B cell (primary cell): ENCODE measurements at regions of chr2 and their contacts with region 1.

Region 1: DNA sequence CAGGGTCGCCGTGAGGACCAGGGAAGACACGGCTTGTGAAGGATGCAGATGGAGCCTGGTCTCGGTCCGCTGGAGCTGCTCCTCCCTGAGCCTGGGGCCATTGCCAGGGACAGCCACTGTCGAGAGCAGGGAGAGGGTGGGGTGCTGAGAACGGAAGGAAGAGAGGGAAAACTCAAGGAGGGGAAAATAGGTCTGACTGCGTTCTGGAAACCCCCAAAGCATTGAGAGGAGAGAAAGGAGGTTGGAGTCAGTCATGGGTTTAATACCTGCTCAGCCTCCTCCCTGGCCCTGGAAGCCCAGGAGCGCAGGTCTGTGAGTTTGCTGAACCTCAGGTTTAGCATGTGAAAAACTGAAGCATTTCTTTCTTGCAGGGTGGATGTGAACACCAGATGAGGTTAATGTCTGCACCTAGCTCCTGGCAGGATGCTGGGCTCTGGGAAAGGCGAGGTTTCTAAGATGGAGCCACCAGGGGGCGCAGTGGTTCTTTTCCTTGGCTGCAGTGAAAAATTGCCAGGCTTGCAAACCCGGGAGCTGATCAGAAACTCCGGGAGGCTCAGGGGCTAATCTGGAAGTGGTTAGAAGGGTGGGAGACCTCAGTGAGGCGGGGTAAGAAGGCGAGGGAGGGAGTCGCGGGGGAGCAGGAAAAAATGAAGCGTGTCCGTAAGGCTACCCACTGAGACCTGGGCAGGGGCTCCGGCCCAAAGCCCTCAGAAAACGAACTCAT is 33.6 kb upstream of the RNF149 start:
- DNase-seq: peak; percentile 73
- ATAC-seq: peak; percentile 56
- H3K4me3 ChIP-seq: no peak overlapping the region
- H3K4me3 Mint-ChIP-seq: no peak overlapping the region
- H3K27ac ChIP-seq: no peak overlapping the region
- H3K27ac Mint-ChIP-seq: no peak overlapping the region
- H3K4me1 ChIP-seq: peaks cover 0 to 8% of the 10 kb centered on the region in 2 donors
- H3K4me1 Mint-ChIP-seq: peaks cover 7% of the 10 kb centered on the region
- H3K27me3 ChIP-seq: no peaks in the 10 kb centered on the region
- H3K27me3 Mint-ChIP-seq: peaks cover 2% of the 10 kb centered on the region
- CTCF ChIP-seq: peak; percentile 90

Region 2: DNA sequence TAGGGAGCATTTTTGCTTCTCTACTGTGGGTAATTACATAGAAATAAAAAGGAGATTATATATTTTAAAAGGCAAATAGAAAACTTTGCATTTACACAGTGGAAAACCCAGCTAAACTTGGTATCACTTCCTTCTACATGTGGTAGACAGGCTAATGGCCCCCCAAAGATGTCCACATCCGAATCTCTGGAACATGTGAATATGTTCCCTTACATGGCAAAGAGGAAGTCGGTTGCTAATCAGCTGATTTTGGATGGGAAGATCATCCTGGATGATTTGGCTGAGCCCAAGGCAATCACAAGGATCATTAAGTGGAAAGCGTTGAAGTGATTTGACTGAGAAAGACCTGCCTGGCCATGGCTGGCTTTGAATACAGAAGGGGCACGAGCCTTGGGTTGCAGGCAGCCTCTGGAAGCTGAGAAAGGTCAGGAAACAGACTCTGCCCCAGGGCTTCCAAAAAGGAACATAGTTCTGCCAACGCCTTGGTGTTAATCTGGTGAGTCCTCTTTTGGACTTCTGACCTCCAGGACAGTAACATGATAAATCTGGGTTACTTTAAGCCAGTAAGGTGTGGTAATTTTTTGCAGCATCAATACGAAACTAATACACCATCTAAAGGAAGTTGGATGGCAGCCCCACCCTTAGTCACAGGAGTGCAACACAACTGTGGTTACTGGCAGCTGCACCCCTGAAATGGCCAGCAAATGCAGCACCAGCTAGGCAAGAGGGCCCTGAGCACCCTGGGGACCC is 19.2 kb after region 1 on chr2:
- CTCF ChIA-PET with region 1: interaction called, 17 read pairs
- POLR2A ChIA-PET with region 1: no interaction called
- intact Hi-C with region 1: no loop called
- DNase-seq: peak; percentile 46
- ATAC-seq: peak; percentile 88
- H3K4me3 ChIP-seq: peak overlapping the region in 2 of 5 experiments; percentile 12 to 31
- H3K4me3 Mint-ChIP-seq: peak overlapping the region; percentile 56
- H3K27ac ChIP-seq: no peak overlapping the region
- H3K27ac Mint-ChIP-seq: peak overlapping the region; percentile 55
- H3K4me1 ChIP-seq: peaks cover 19 to 20% of the 10 kb centered on the region in 2 donors
- H3K4me1 Mint-ChIP-seq: peaks cover 28% of the 10 kb centered on the region
- H3K27me3 ChIP-seq: no peaks in the 10 kb centered on the region
- H3K27me3 Mint-ChIP-seq: peaks cover 7% of the 10 kb centered on the region
- CTCF ChIP-seq: no peak

Region 3: GRCh38 chr2:101387151-101387807 is 45.2 kb after region 1 on chr2 and contains the start of gene CREG2:
- CTCF ChIA-PET with region 1: interaction called, 7 read pairs
- POLR2A ChIA-PET with region 1: no interaction called
- intact Hi-C with region 1: loop called (anchors 2 kb)
- DNase-seq: peak; percentile 70
- ATAC-seq: peak; percentile 77
- H3K4me3 ChIP-seq: peak within 1 kb of the TSS in 4 of 5 experiments; percentile 30 to 56 (median 44)
- H3K4me3 Mint-ChIP-seq: peak within 1 kb of the TSS; percentile 84
- H3K27ac ChIP-seq: no peak within 1 kb of the TSS
- H3K27ac Mint-ChIP-seq: no peak within 1 kb of the TSS
- H3K4me1 ChIP-seq: peaks cover 13 to 16% of the 10 kb centered on the region in 2 donors
- H3K4me1 Mint-ChIP-seq: peaks cover 14% of the 10 kb centered on the region
- H3K27me3 ChIP-seq: peaks cover 0 to 40% (median 27%) of the 10 kb centered on the region in 4 experiments
- H3K27me3 Mint-ChIP-seq: peaks cover 55% of the 10 kb centered on the region
- CTCF ChIP-seq: peak; percentile 69
- total RNA-seq, gene CREG2: 0.34 TPM in 1 of 2 replicates, not detected in the other